Naive thymus-derived CD4-positive, alpha-beta T cell (primary cell): ENCODE measurements at regions of chr3 and their contacts with region 1.

Region 1: GRCh38 chr3:158644345-158644908 is at the start of gene GFM1:
- DNase-seq: peak; percentile 76 to 92 (median 86)
- ATAC-seq: peak; percentile 98
- H3K4me3 ChIP-seq: peak within 1 kb of the TSS; percentile 98
- H3K4me3 Mint-ChIP-seq: peak within 1 kb of the TSS; percentile 87 to 98 (median 96)
- H3K27ac ChIP-seq: peak within 1 kb of the TSS; percentile 82
- H3K27ac Mint-ChIP-seq: peak within 1 kb of the TSS; percentile 63 to 96 (median 93)
- H3K4me1 ChIP-seq: peaks cover 8 to 21% of the 10 kb centered on the region in 2 donors
- H3K4me1 Mint-ChIP-seq: peaks cover 17 to 58% (median 41%) of the 10 kb centered on the region in 7 donors
- H3K27me3 ChIP-seq: no peaks in the 10 kb centered on the region
- H3K27me3 Mint-ChIP-seq: no peaks in the 10 kb centered on the region
- total RNA-seq, gene GFM1: 36.4 to 43.4 (median 41.8) TPM

Region 2: DNA sequence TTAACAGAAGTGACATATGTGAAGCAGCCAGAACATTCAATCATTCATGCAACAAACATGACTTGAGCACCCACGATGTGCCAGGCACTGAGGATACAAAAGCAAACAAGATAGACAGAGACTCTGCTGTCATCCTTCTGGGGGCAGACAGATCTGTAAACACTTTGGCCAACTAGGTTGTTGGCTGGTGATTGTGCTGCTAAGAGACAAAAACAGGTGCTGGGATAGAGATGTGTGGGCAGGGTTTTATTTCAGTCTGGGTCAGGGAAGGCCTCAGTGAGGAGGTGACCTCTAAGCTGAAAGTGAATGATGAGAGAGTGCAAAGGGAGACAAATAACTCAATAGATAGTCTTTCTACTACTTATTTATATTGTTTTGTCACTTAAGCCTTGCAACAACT is 994.3 kb before region 1 on chr3:
- CTCF ChIA-PET with region 1: no interaction called
- POLR2A ChIA-PET with region 1: no interaction called
- intact Hi-C with region 1: no loop called
- DNase-seq: no peak
- ATAC-seq: no peak
- H3K4me3 ChIP-seq: no peak overlapping the region
- H3K4me3 Mint-ChIP-seq: no peak overlapping the region
- H3K27ac ChIP-seq: no peak overlapping the region
- H3K27ac Mint-ChIP-seq: no peak overlapping the region
- H3K4me1 ChIP-seq: no peaks in the 10 kb centered on the region
- H3K4me1 Mint-ChIP-seq: peaks cover 0 to 1% (median 0%) of the 10 kb centered on the region in 7 donors
- H3K27me3 ChIP-seq: no peaks in the 10 kb centered on the region
- H3K27me3 Mint-ChIP-seq: peaks cover 0 to 18% (median 6%) of the 10 kb centered on the region in 5 donors

Region 3: DNA sequence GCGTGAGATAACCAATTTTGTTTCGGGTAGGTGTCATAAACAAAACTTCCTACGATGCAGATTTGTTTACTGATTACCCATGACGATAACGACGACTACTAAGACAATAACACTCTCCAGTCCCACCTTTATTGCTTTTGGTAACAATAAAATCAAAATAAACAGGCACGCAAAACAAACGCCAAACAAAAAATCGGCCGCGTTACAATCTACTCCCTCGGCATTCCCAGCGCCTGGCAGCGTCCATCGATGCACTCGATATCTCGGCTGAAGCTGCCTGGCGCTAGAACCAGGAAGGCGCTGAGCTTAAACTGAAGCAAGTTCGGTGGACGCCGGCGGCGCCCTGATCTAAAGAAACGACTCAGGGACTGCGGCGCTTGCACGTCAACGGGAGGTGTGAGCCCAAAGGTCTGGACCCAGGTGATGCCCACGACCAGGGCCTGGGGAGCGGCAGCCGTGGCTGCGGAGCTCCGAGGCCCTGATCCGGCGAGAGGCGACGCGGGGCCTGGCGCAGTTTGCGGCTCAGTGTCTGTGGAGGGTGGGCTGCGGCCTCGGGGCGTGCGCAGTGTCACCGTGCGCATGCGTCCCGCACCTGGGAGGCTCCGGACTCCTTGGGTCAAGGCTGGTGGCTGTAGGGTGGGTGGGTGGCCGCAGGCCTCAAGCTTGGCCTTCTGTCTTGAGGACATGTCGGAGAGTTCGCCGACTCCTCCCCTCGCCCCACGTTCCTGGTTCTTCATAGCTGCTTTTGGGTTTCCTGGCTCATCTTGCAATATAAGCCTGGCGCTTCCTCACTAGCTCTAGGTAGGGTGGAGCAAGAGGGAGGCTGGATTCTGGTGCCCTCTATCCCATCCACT is 534.4 kb before region 1 on chr3 and contains the start of gene RSRC1:
- CTCF ChIA-PET with region 1: interaction called, 3 read pairs
- POLR2A ChIA-PET with region 1: interaction called, 9 read pairs
- intact Hi-C with region 1: loop called (anchors 2 to 5 kb)
- DNase-seq: peak; percentile 42 to 81 (median 73)
- ATAC-seq: peak; percentile 96
- H3K4me3 ChIP-seq: peak within 1 kb of the TSS; percentile 90
- H3K4me3 Mint-ChIP-seq: peak within 1 kb of the TSS; percentile 91 to 100 (median 98)
- H3K27ac ChIP-seq: peak within 1 kb of the TSS; percentile 61
- H3K27ac Mint-ChIP-seq: peak within 1 kb of the TSS; percentile 61 to 96 (median 88)
- H3K4me1 ChIP-seq: peaks cover 26 to 37% of the 10 kb centered on the region in 2 donors
- H3K4me1 Mint-ChIP-seq: peaks cover 39 to 84% (median 65%) of the 10 kb centered on the region in 7 donors
- H3K27me3 ChIP-seq: peaks cover 18 to 34% of the 10 kb centered on the region in 2 donors
- H3K27me3 Mint-ChIP-seq: peaks cover 34 to 45% (median 39%) of the 10 kb centered on the region in 5 donors
- total RNA-seq, gene RSRC1: 30.0 to 45.0 (median 37.4) TPM

Region 4: GRCh38 chr3:158631991-158632390 is 12.4 kb before region 1 on chr3:
- CTCF ChIA-PET with region 1: interaction called, 13 read pairs
- POLR2A ChIA-PET with region 1: no interaction called
- intact Hi-C with region 1: no loop called
- DNase-seq: no peak
- ATAC-seq: no peak
- H3K4me3 ChIP-seq: no peak overlapping the region
- H3K4me3 Mint-ChIP-seq: no peak overlapping the region
- H3K27ac ChIP-seq: no peak overlapping the region
- H3K27ac Mint-ChIP-seq: no peak overlapping the region
- H3K4me1 ChIP-seq: no peaks in the 10 kb centered on the region
- H3K4me1 Mint-ChIP-seq: no peaks in the 10 kb centered on the region
- H3K27me3 ChIP-seq: no peaks in the 10 kb centered on the region
- H3K27me3 Mint-ChIP-seq: peaks cover 3 to 35% (median 29%) of the 10 kb centered on the region in 5 donors

Region 5: GRCh38 chr3:158672293-158673176 is 28.1 kb after region 1 on chr3 and contains the start of gene LXN:
- CTCF ChIA-PET with region 1: interaction called, 3 read pairs
- POLR2A ChIA-PET with region 1: interaction called, 6 read pairs
- intact Hi-C with region 1: loop called (anchors 1 kb)
- DNase-seq: peak; percentile 42 to 86 (median 74)
- ATAC-seq: peak; percentile 99
- H3K4me3 ChIP-seq: peak within 1 kb of the TSS; percentile 79
- H3K4me3 Mint-ChIP-seq: peak within 1 kb of the TSS; percentile 82 to 97 (median 92)
- H3K27ac ChIP-seq: peak within 1 kb of the TSS; percentile 71
- H3K27ac Mint-ChIP-seq: peak within 1 kb of the TSS; percentile 67 to 97 (median 91)
- H3K4me1 ChIP-seq: peaks cover 15 to 19% of the 10 kb centered on the region in 2 donors
- H3K4me1 Mint-ChIP-seq: peaks cover 13 to 40% (median 33%) of the 10 kb centered on the region in 7 donors
- H3K27me3 ChIP-seq: no peaks in the 10 kb centered on the region
- H3K27me3 Mint-ChIP-seq: no peaks in the 10 kb centered on the region
- total RNA-seq, gene LXN: 2.1 to 10.9 (median 6.0) TPM

Region 6: GRCh38 chr3:158790901-158791589 is 146.6 kb after region 1 on chr3:
- CTCF ChIA-PET with region 1: interaction called, 7 read pairs
- POLR2A ChIA-PET with region 1: no interaction called
- intact Hi-C with region 1: loop called in 1 of 2 experiments (anchors 5 kb)
- DNase-seq: peak in 7 of 9 donors; percentile 38 to 66 (median 56)
- ATAC-seq: peak; percentile 82
- H3K4me3 ChIP-seq: no peak overlapping the region
- H3K4me3 Mint-ChIP-seq: peak overlapping the region; percentile 35 to 88 (median 66)
- H3K27ac ChIP-seq: no peak overlapping the region
- H3K27ac Mint-ChIP-seq: peak overlapping the region in 1 of 9 donors; percentile 16
- H3K4me1 ChIP-seq: no peaks in the 10 kb centered on the region
- H3K4me1 Mint-ChIP-seq: peaks cover 3 to 8% (median 4%) of the 10 kb centered on the region in 7 donors
- H3K27me3 ChIP-seq: no peaks in the 10 kb centered on the region
- H3K27me3 Mint-ChIP-seq: peaks cover 0 to 10% (median 0%) of the 10 kb centered on the region in 5 donors